PC-9 (cell line): ENCODE measurements at regions of chrX and their contacts with region 1.

Region 1: GRCh38 chrX:48021026-48021900 is 14.5 kb downstream of the SPACA5 start:
- DNase-seq: peak; percentile 43 to 53
- H3K4me3 ChIP-seq: peak overlapping the region; percentile 59
- H3K27ac ChIP-seq: peak overlapping the region; percentile 50; the same call in 1 of the 2 replicates
- H3K4me1 ChIP-seq: no peaks in the 10 kb centered on the region
- H3K27me3 ChIP-seq: no peaks in the 10 kb centered on the region
- CTCF ChIP-seq: no peak

Region 2: DNA sequence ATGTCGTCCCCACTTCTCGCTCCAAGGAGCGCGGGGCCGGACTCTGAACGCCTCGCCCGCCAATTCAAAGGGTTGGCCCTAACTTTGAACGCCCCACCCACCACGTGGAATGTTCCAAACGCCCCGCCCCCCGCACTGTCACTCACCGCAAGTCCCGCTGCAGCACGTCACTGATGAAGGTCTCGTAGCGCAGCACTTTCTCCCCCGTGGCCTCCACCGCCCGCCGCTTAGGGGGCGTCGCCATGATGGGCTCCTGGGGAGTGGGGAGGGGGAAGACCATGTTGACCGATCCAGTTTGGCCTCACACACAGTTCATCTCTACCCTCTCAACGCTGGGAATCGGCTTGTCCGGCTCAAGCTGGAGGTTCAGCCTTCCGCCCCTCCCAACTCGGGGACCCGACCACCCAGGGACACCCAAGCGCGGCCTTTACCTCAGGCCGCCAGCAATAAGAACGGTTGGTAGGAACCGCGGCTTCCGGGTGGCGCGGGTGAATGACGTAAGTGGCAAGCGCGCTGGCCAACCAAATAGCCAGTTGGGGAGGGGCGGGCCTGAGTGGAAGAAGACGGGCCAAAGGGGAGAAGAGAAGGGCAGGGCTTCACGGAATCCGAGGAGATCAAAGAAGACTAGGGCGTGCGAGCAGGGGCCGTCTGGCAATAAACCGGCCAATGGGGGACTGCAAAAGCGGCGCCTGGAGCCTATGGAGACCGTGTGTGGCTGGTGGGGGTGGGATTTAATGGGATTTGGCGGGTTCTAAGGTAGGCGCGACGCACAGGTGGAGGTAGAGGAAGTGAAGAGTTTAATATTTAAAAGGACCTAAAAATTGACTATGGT is 362.4 kb before region 1 on chrX and contains the start of gene UXT:
- CTCF ChIA-PET with region 1: no interaction called
- POLR2A ChIA-PET with region 1: no interaction called
- intact Hi-C with region 1: loop called (anchors 10 kb)
- DNase-seq: peak; percentile 74 to 84
- H3K4me3 ChIP-seq: peak within 1 kb of the TSS; percentile 62
- H3K27ac ChIP-seq: peak within 1 kb of the TSS; percentile 93
- H3K4me1 ChIP-seq: no peaks in the 10 kb centered on the region
- H3K27me3 ChIP-seq: no peaks in the 10 kb centered on the region
- CTCF ChIP-seq: no peak
- total RNA-seq, gene UXT: 46.0 and 53.8 TPM in 2 replicates

Region 3: DNA sequence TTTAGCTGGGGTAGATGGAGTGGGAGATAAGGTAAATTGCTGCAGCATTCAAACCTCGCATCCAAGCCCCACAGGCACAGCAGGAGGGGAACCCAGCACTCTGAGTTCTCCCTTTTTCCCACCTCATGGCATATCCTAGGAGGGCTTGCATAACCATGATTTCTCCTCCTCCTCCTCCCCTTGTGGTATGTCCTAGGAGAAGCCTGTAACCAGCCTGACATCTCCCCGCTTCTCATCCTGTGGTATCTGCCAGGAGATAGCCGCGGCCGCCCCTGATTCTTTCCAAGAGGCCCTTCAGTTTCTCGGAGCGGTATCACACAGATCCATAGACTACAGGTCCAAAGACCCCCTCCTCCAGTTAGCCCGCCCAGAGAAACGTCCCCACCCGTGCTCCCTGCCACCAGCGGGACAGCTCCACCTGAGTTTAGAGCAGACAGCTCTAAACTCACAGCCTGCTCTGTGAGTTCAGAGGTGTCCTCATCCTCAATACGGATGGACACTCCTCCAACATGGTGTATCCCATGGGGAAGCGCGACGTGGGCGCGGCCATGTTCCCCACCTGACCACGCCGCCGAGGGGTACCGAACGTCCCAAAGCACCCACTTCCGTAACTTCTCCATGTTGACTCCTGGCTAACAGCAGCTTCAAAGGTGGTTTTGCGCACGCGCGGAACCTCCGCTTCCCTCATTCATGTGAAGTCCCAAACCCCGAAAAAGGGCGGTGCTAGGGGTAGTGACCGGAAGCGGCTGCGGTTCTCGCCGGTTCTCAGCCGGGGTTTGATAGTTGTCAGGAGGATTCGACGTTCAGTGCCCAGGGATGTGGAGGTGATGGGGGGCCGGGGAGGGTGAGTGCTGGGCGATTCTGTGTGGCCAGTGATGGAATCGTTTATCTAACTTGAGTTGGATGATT is 184.8 kb before region 1 on chrX and contains the start of gene ZNF81:
- CTCF ChIA-PET with region 1: no interaction called
- POLR2A ChIA-PET with region 1: no interaction called
- intact Hi-C with region 1: loop called (anchors 5 kb)
- DNase-seq: peak; percentile 82 to 87
- H3K4me3 ChIP-seq: peak within 1 kb of the TSS; percentile 59
- H3K27ac ChIP-seq: peak within 1 kb of the TSS; percentile 26; the same call in 1 of the 2 replicates
- H3K4me1 ChIP-seq: no peaks in the 10 kb centered on the region
- H3K27me3 ChIP-seq: no peaks in the 10 kb centered on the region
- CTCF ChIP-seq: no peak
- total RNA-seq, gene ZNF81: 2.0 and 3.7 TPM in 2 replicates

Region 4: DNA sequence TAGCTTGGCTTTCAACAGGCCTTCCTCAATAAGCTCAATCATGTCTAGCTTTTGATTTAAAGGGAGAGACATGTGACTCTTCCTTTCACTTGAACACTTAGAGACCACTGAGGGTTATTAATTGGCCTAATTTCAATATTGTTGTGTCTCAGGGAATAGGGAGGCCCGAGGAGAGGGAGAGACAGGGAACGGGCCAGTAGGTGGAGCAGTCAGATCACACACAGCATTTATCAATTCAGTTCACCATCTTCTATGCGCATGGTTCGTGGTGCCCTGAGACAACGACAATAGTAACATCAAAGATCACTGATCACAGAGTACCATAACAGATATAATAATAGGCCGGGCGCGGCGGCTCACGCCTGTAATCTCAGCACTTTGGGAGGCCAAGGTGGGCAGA is 166.8 kb before region 1 on chrX:
- CTCF ChIA-PET with region 1: no interaction called
- POLR2A ChIA-PET with region 1: no interaction called
- intact Hi-C with region 1: loop called (anchors 5 kb)
- DNase-seq: no peak
- H3K4me3 ChIP-seq: no peak overlapping the region
- H3K27ac ChIP-seq: no peak overlapping the region
- H3K4me1 ChIP-seq: no peaks in the 10 kb centered on the region
- H3K27me3 ChIP-seq: no peaks in the 10 kb centered on the region
- CTCF ChIP-seq: no peak; the same call in 1 of the 2 replicates